Breast epithelium (tissue), 4 donors: ENCODE measurements at regions of chr14 and their contacts with region 1.

Region 1: GRCh38 chr14:23120541-23121251 is 1.6 kb upstream of the CEBPE start:
- DNase-seq: peak; percentile 88 to 92
- H3K4me3 ChIP-seq: no peak overlapping the region
- H3K27ac ChIP-seq: peak overlapping the region in 1 of 2 donors; percentile 4
- H3K4me1 ChIP-seq: no peaks in the 10 kb centered on the region
- H3K27me3 ChIP-seq: no peaks in the 10 kb centered on the region
- CTCF ChIP-seq: peak; percentile 100
- POLR2A ChIP-seq: no peak

Region 2: DNA sequence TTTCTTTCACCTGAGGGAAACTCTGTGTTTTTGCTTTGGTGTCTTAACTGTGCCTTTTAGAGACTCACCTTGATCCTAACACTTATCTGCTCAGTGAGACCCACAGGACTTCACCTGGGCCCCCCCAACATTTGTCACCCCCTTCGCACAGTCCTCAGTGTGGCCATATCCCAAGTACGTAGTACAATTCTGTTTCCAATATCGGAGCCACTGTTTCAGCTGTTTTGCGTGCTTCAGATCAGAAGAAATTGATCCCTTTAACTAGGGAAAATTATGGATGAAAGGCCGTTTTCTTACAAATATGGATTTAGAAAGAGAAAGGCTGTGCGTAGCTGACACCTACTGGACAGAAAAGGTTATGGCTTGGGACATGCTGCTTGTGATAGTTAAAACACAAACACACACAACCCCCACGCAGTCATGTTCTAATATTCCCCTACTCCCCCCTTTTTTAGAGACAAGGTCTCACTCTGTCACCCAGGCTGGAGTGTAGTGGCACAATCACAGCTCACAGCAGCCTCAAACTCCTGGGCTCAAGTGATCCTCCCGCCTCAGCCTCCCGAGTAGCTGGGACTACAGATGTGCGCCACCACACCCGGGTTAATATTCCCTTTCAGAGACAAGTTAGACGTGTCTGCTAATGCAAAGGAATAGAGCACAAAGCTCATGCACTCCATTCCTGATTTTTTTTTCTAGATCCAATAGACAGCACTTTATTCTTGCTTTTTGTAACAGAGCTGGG is 66.4 kb after region 1 on chr14:
- intact Hi-C with region 1: loop called (anchors 5 kb)
- DNase-seq: no peak
- H3K4me3 ChIP-seq: no peak overlapping the region
- H3K27ac ChIP-seq: no peak overlapping the region
- H3K4me1 ChIP-seq: no peaks in the 10 kb centered on the region
- H3K27me3 ChIP-seq: no peaks in the 10 kb centered on the region
- CTCF ChIP-seq: peak; percentile 78 to 97 (median 97)
- POLR2A ChIP-seq: no peak